ENCODE measurements at regions of chr5 and their contacts with region 1.

Region 1: DNA sequence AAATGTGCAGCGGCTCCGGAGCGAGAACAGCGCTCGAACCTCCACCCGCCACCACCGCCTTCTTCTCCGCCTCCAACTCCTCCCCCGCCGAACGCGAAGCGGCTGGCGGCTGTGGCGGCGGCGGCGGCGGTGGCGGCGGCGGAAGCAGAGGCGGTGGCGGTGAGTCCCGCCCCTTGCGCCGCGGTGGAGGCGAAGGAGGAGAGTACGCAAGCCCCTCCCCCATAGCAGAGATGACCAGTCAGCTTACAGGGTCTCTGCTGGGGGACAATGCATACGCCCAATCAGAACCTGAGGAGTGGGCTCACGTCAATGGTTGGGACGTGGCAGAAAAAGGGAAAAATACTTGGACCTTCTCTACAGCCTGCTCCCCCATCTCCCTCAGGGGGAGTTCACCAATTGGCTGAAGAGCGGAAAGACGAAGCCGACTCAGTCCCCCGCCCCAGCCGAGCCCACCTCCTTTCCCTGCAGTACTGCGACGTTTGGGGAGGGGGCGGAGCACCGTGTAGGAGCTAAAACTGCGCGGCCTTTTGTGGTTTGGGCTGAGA is at the start of gene PJA2:
- DNase-seq: peak; percentile 98 to 99 (median 99)
- H3K4me3 ChIP-seq: peak within 1 kb of the TSS; percentile 94
- H3K27ac ChIP-seq: peak within 1 kb of the TSS; percentile 92 to 99
- H3K4me1 ChIP-seq: peaks cover 2% of the 10 kb centered on the region
- H3K27me3 ChIP-seq: no peaks in the 10 kb centered on the region
- CTCF ChIP-seq: peak; percentile 30 to 64 (median 41)
- EP300 ChIP-seq: no peak
- POLR2A ChIP-seq: peak; percentile 78
- total RNA-seq, gene PJA2: 96.0 to 122 (median 110) TPM

Region 2: GRCh38 chr5:109329333-109330237 is 80.3 kb before region 1 on chr5:
- intact Hi-C with region 1: loop called in 1 of 4 experiments (anchors 10 kb)
- DNase-seq: no peak
- H3K4me3 ChIP-seq: no peak overlapping the region
- H3K27ac ChIP-seq: no peak overlapping the region
- H3K4me1 ChIP-seq: peaks cover 7% of the 10 kb centered on the region
- H3K27me3 ChIP-seq: no peaks in the 10 kb centered on the region
- CTCF ChIP-seq: no peak
- EP300 ChIP-seq: no peak
- POLR2A ChIP-seq: no peak

Region 3: GRCh38 chr5:109690975-109691574 is 281.2 kb after region 1 on chr5:
- intact Hi-C with region 1: loop called in 1 of 4 experiments (anchors 5 kb)
- DNase-seq: peak; percentile 65 to 84 (median 77)
- H3K4me3 ChIP-seq: peak overlapping the region; percentile 80
- H3K27ac ChIP-seq: peak overlapping the region; percentile 98 to 99
- H3K4me1 ChIP-seq: peaks cover 11% of the 10 kb centered on the region
- H3K27me3 ChIP-seq: no peaks in the 10 kb centered on the region
- CTCF ChIP-seq: peak; percentile 24 to 72 (median 72)
- EP300 ChIP-seq: no peak
- POLR2A ChIP-seq: no peak

Measured in ovary (tissue), 10 donors.